HCT116 (cell line): ENCODE measurements at regions of chr20 and their contacts with region 1.

Region 1: DNA sequence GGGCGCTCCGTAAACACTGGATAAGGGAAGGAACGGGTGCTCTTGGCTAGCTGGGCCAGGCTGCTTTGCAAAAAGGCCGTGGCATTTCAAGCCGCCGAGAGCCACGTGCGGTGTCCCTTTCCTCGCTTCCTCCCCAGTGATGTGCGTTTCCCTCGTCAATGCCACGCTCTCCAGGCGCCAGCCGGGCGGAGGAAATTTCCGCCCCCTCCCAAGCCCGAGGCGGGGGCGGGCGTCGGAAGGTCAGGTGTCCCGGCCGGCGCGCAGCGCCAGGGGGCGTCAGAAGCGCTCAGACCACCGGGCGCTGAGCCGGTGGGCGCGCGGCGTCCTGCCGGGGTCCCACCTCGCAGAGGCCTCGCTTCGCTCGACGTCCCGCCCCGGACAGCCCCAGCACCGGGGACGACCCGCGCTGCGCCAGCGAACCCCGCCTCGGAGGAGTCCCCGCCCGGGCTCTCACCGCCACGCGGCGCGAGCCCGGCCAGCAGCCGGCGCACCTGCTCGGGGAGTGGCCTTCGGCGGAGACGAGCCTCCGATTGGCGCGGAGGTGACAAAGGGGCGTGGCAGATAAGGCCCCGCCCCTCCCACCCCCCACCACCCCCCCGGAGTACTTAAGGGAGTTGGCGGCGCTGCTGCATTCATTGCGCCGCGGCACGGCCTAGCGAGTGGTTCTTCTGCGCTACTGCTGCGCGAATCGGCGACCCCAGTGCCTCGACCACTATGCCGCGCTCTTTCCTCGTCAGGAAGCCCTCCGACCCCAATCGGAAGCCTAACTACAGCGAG is at the start of gene SNAI1:
- DNase-seq: peak; percentile 66
- ATAC-seq: peak; percentile 83
- H3K4me3 ChIP-seq: peak within 1 kb of the TSS; percentile 69 to 100
- H3K27ac ChIP-seq: peak within 1 kb of the TSS; percentile 86
- H3K4me1 ChIP-seq: peaks cover 12 to 62% of the 10 kb centered on the region in 2 experiments
- H3K27me3 ChIP-seq: no peaks in the 10 kb centered on the region
- CTCF ChIP-seq: peak; percentile 35 to 62 (median 56); a peak in 5 of 6 replicates
- POLR2A ChIP-seq: peak; percentile 99
- RAD21 ChIP-seq: peak; percentile 41
- total RNA-seq, gene SNAI1: 13.4 TPM

Region 2: GRCh38 chr20:50070991-50071888 is 88.7 kb after region 1 on chr20:
- CTCF ChIA-PET with region 1: interaction called, 128 read pairs
- POLR2A ChIA-PET with region 1: interaction called, 9 read pairs
- RAD21 ChIA-PET with region 1: interaction called, 10 to 25 read pairs
- intact Hi-C with region 1: loop called (anchors 1 kb)
- DNase-seq: peak; percentile 48
- ATAC-seq: peak; percentile 99
- H3K4me3 ChIP-seq: peak overlapping the region; percentile 20 to 38; a peak in 3 of 4 replicates
- H3K27ac ChIP-seq: no peak overlapping the region
- H3K4me1 ChIP-seq: peaks cover 3 to 14% of the 10 kb centered on the region in 2 experiments; a peak in 3 of 4 replicates
- H3K27me3 ChIP-seq: no peaks in the 10 kb centered on the region
- CTCF ChIP-seq: peak; percentile 96 to 99 (median 98)
- POLR2A ChIP-seq: no peak
- RAD21 ChIP-seq: peak; percentile 99

Region 3: DNA sequence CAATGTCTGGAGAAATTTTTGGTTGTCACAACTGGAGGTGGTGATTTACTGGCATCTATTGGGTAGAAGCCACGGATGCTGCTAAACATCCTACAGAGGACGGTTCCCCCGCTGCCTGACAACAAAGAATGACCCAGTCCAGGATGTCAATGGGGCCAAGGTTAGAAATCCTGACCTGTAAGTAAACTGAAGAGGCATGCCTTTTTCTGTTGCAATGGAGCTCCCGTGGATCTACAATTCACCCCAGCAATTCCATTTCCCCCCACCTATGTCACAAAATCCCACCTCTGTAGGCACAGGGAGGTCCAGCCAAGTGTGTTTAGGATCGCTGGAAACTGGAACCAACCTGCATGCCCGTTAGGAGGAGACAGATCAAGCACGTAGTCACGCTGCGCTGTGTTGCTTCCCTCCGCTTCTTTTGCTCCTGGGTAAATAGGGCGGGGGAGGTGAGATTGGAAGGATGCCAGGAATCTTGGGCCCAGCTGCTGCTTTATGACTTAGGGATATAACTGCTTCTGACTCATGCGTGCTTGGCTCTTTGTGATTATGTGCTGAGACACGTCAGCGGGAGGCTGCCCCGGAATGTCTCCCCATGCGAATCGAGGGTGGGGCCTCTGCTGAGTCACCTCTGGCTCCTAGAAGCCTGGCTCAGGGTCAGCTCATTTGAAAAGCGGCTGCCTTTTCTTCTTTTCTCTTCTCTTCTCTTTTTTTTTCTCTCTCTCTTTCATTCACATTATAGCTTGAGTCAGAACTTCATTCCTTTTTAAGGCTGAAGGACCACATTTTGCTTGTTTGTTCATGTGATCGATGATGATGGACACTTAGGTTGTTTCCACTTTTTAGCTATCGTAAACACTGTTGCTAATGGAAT is 183.4 kb after region 1 on chr20:
- CTCF ChIA-PET with region 1: interaction called, 13 read pairs
- POLR2A ChIA-PET with region 1: no interaction called
- RAD21 ChIA-PET with region 1: no interaction called
- intact Hi-C with region 1: loop called (anchors 5 kb)
- DNase-seq: peak; percentile 100
- ATAC-seq: peak; percentile 90
- H3K4me3 ChIP-seq: peak overlapping the region; percentile 41 to 54
- H3K27ac ChIP-seq: peak overlapping the region; percentile 83
- H3K4me1 ChIP-seq: peaks cover 40 to 61% of the 10 kb centered on the region in 2 experiments
- H3K27me3 ChIP-seq: no peaks in the 10 kb centered on the region
- CTCF ChIP-seq: no peak
- POLR2A ChIP-seq: peak; percentile 31
- RAD21 ChIP-seq: peak; percentile 34; the same call in 1 of the 2 replicates

Region 4: GRCh38 chr20:50460460-50461267 is 478.1 kb after region 1 on chr20:
- CTCF ChIA-PET with region 1: no interaction called
- POLR2A ChIA-PET with region 1: no interaction called
- RAD21 ChIA-PET with region 1: no interaction called
- intact Hi-C with region 1: loop called (anchors 10 kb)
- DNase-seq: peak; percentile 69
- ATAC-seq: peak; percentile 92
- H3K4me3 ChIP-seq: no peak overlapping the region
- H3K27ac ChIP-seq: peak overlapping the region; percentile 10; the same call in 1 of the 2 replicates
- H3K4me1 ChIP-seq: peaks cover 4 to 25% of the 10 kb centered on the region in 2 experiments; a peak in 3 of 4 replicates
- H3K27me3 ChIP-seq: no peaks in the 10 kb centered on the region
- CTCF ChIP-seq: peak; percentile 92 to 93 (median 92)
- POLR2A ChIP-seq: no peak
- RAD21 ChIP-seq: peak; percentile 99